Activated naive CD4-positive, alpha-beta T cell treated with anti-CD3 and anti-CD28 coated beads for 36 hours (primary cell): ENCODE measurements at regions of chr5 and their contacts with region 1.

Region 1: GRCh38 chr5:154214371-154215106 is 24.0 kb downstream of the GALNT10 start:
- DNase-seq: peak; percentile 35
- H3K4me3 Mint-ChIP-seq: peak overlapping the region; percentile 32
- H3K27ac Mint-ChIP-seq: peak overlapping the region; percentile 83
- H3K4me1 Mint-ChIP-seq: peaks cover 49% of the 10 kb centered on the region
- H3K27me3 Mint-ChIP-seq: no peaks in the 10 kb centered on the region

Region 2: GRCh38 chr5:154189819-154190594 is 24.5 kb before region 1 on chr5:
- CTCF ChIA-PET with region 1: interaction called, 3 read pairs
- intact Hi-C with region 1: loop called (anchors 1 kb)
- DNase-seq: peak; percentile 82
- H3K4me3 Mint-ChIP-seq: peak overlapping the region; percentile 81
- H3K27ac Mint-ChIP-seq: no peak overlapping the region
- H3K4me1 Mint-ChIP-seq: peaks cover 32% of the 10 kb centered on the region
- H3K27me3 Mint-ChIP-seq: peaks cover 7% of the 10 kb centered on the region

Region 3: DNA sequence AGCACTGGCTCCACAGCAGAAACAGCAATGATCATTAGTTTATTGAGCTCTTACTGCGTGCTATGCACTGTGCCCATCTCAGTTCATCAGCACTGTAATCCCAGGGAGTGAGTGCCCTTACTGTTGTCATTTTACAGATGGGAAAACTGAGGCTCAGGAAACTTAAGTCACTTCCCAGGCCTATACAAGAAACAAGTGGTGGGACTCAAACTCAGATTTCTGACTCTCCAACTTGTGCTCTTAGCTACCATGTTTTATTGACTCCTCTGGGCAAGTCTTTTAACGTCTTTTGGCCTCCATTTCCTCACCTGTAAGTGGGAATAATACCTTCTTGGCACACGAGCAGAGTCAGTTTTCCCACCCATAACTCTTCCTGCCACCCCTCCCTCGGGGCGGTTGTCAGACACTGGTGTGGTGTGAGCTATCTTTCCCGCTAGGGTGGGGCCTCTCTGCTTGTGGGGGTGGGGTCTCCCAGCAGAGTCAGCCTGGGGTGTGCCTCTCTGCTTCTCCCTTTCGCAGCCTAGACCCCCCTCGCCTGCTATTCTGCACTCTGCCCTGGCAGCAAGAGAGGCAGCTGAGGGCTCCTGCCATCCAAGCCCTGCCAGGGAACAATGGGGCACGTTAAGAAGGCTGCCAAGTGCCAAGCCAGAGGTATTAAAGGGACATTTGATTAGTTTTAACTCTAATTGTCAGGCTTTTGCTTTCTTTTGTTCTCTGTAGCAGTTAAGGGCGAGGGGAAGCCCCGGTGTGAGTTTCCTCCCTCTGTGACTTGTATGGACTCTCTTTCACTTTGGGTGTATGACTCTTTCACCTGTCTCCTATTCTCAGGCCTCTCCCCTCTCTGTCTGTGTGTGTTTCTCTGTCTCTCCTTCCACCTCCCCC is 11.9 kb before region 1 on chr5:
- CTCF ChIA-PET with region 1: interaction called, 17 read pairs
- intact Hi-C with region 1: loop called (anchors 1 kb)
- DNase-seq: peak; percentile 86
- H3K4me3 Mint-ChIP-seq: peak overlapping the region; percentile 69
- H3K27ac Mint-ChIP-seq: peak overlapping the region; percentile 92
- H3K4me1 Mint-ChIP-seq: peaks cover 58% of the 10 kb centered on the region
- H3K27me3 Mint-ChIP-seq: no peaks in the 10 kb centered on the region

Region 4: DNA sequence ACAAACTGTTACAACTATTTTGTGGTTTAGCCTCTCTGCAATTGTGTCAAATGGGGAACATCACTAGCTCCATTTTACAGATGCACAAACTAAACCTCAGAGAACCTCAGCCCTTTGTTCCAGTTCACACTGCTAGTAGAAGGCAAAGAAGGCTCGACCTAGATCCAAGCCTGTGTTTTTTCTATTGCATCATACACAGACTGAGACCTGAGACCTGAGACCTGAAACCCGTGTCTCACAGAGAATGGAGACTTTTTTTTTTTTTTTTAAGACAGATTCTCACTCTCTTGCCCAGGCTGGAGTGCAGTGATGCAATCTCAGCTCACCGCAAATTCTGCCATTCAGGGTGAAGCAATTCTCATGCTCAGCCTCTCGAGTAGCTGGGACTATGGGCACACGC is 96.8 kb after region 1 on chr5:
- CTCF ChIA-PET with region 1: no interaction called
- intact Hi-C with region 1: loop called (anchors 1 kb)
- DNase-seq: peak; percentile 63
- H3K4me3 Mint-ChIP-seq: no peak overlapping the region
- H3K27ac Mint-ChIP-seq: peak overlapping the region; percentile 69
- H3K4me1 Mint-ChIP-seq: peaks cover 33% of the 10 kb centered on the region
- H3K27me3 Mint-ChIP-seq: no peaks in the 10 kb centered on the region

Region 5: GRCh38 chr5:154324033-154324432 is 109.5 kb after region 1 on chr5:
- CTCF ChIA-PET with region 1: no interaction called
- intact Hi-C with region 1: no loop called
- DNase-seq: no peak
- H3K4me3 Mint-ChIP-seq: no peak overlapping the region
- H3K27ac Mint-ChIP-seq: no peak overlapping the region
- H3K4me1 Mint-ChIP-seq: no peaks in the 10 kb centered on the region
- H3K27me3 Mint-ChIP-seq: no peaks in the 10 kb centered on the region

Region 6: DNA sequence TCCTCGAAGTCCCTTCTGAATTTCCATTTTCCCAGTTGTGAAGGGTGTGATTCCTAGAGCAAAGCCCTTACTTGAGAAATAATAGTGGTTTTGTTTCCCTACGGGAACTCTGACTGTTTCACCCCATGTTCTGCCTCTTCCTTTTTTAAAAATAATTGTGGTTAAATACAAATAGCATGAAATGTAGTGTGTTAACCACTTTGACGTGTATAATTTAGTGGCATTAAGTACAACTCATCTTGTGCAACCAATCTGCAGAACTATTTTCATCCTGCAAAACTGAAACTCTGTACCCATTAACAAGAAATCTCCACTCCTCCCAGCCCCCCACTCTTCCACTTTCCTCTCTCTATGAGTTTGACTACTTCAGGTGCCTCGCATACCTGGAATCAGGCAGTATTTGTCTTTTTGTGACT is 299.1 kb after region 1 on chr5:
- CTCF ChIA-PET with region 1: no interaction called
- intact Hi-C with region 1: loop called (anchors 5 kb)
- DNase-seq: peak; percentile 66
- H3K4me3 Mint-ChIP-seq: no peak overlapping the region
- H3K27ac Mint-ChIP-seq: no peak overlapping the region
- H3K4me1 Mint-ChIP-seq: peaks cover 19% of the 10 kb centered on the region
- H3K27me3 Mint-ChIP-seq: peaks cover 35% of the 10 kb centered on the region